Activated CD4-positive, alpha-beta T cell treated with anti-CD3 and anti-CD28 coated beads for 36 hours (primary cell): ENCODE measurements at regions of chr6 and their contacts with region 1.

Region 1: GRCh38 chr6:42043787-42044475 is 6.4 kb upstream of the TAF8 start:
- DNase-seq: peak; percentile 97
- ATAC-seq: peak; percentile 42
- H3K4me3 Mint-ChIP-seq: peak overlapping the region; percentile 88
- H3K27ac Mint-ChIP-seq: peak overlapping the region; percentile 100
- H3K4me1 Mint-ChIP-seq: peaks cover 84% of the 10 kb centered on the region
- H3K27me3 Mint-ChIP-seq: no peaks in the 10 kb centered on the region

Region 2: DNA sequence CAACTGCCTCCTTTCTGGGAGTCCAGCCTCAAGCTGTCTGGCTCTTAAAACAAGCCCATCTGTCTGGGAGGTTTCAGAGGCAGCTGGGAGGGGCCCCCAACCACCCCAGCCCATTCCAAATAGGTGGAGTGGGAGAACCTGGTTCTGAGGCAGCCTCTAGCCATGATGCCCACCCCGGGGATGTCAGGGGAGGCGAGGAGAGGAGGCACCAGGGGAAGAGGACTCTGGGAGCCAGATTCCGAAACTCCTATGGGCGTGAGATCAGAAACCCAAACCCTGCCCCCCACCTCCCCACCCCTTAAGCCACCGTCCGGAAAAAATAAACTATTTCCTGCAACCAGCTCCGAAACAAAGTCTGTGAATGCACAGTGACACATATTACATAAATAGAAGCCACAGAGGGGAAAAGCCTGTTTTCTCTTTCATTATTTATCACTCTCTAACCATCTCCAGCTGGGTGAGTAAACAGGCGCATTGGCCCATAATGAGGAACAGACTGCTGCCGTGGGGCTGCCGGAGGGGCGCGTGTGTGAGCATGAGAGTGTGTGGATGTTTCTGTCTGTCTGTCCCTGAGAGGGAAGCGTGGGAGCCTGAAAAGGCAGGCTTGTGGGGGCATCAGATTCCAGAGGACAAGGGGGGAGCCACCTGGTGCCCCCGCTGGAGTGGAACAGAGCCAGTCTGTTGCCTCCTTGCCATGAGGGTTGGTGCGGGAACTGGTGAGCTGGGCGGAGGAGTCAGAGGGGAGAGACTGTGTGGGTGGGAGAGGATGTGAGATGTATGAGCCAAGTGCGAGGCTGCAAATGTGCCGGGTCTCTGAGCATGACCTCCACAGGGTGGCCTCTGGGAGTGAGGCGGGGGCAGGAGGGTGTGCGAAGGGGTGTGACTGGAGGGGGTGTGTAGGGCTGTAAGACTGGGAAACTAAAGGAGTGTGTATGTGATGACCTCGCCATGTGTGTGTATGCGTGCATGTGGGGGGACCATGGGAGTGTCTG is 512.0 kb before region 1 on chr6:
- CTCF ChIA-PET with region 1: no interaction called
- POLR2A ChIA-PET with region 1: no interaction called
- intact Hi-C with region 1: loop called in 1 of 2 experiments (anchors 5 kb)
- DNase-seq: peak; percentile 87
- ATAC-seq: peak; percentile 88
- H3K4me3 Mint-ChIP-seq: peak overlapping the region; percentile 64
- H3K27ac Mint-ChIP-seq: peak overlapping the region; percentile 93
- H3K4me1 Mint-ChIP-seq: peaks cover 35% of the 10 kb centered on the region
- H3K27me3 Mint-ChIP-seq: peaks cover 15% of the 10 kb centered on the region

Region 3: DNA sequence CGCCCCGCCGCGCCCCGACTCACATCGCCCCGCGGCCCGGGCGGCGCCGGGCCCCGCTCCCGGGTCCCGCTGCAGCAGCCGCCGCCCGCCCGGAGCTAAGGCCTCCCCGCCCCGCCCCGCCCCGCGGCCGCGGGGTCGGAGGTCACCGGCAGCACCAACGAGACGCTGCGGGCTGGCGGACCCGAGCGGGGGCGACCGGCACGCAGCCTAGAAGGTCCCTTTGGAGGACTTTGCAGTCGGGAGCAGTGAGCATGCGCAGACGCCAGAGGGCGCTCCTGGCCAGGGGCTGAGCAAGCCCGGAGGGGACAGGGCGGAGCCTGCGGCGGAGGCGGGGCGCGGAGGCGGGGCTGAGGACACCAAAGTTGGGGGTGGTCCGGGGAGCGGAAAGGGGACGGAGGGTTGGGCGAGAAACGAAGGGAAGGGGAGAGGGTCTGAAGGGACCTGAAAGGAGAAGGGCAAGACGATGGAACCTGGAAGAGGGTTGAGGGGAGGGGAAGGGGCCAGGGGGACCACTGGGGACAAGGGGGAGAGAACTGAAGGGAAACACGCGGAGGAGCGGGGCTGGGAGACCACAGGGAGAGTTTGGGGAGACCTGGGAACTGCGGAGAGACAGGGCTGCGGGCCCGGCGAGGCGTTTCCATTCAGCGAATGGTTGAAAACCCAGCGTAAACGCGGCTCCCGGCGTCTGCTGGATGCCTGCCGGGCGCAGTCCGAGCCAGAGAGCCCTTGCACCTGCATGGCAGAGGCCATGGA is 264.0 kb before region 1 on chr6 and contains the start of gene FRS3:
- CTCF ChIA-PET with region 1: interaction called, 63 read pairs
- POLR2A ChIA-PET with region 1: no interaction called
- intact Hi-C with region 1: loop called (anchors 1 kb)
- DNase-seq: peak; percentile 100
- ATAC-seq: peak; percentile 98
- H3K4me3 Mint-ChIP-seq: peak within 1 kb of the TSS; percentile 85
- H3K27ac Mint-ChIP-seq: peak within 1 kb of the TSS; percentile 75
- H3K4me1 Mint-ChIP-seq: peaks cover 18% of the 10 kb centered on the region
- H3K27me3 Mint-ChIP-seq: peaks cover 7% of the 10 kb centered on the region
- total RNA-seq, gene FRS3: 4.8 to 5.6 TPM

Region 4: GRCh38 chr6:41895300-41896233 is 148.4 kb before region 1 on chr6 and contains the start of gene USP49:
- CTCF ChIA-PET with region 1: interaction called, 9 read pairs
- POLR2A ChIA-PET with region 1: no interaction called
- intact Hi-C with region 1: loop called in 1 of 2 experiments (anchors 1 kb)
- DNase-seq: peak; percentile 96
- ATAC-seq: peak; percentile 92
- H3K4me3 Mint-ChIP-seq: no peak within 1 kb of the TSS
- H3K27ac Mint-ChIP-seq: peak within 1 kb of the TSS; percentile 95
- H3K4me1 Mint-ChIP-seq: peaks cover 13% of the 10 kb centered on the region
- H3K27me3 Mint-ChIP-seq: no peaks in the 10 kb centered on the region
- total RNA-seq, gene USP49: 5.6 to 7.3 TPM

Region 5: DNA sequence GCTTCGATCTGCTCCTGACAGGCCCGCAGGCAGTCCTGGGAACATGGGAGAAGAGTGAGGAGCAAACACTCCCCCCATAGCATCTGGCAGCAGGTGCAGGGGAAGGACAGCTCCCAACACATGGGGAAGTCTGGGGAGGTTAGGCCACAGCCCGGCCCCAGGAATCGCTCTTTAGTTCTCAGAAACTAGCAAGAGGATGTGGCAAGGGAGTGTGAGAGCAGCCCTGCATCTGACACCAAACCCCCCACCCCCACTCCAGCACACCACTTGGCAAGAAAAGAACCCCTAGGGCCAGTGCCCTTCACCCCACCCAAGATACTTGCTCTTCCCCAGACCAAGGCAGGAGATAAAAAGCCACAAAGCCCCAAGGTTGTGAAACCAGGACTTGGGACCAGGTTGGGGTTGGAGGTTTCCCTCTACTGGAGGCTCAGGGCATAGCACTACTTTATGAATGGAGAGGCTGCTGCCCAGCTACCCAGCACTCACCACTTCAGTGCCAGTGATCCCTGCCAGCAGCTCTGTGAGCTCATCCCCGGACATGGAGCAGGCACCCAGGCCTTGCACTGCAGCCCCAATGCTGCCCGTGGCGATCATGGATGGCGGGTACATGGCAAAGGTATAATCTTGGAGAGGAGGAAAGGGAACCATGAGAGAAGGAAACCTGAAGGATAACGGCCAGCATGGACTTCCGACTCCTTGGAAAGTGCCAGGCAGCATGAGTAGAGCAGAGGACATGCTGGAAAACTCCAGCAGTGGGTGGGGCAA is 107.7 kb before region 1 on chr6:
- CTCF ChIA-PET with region 1: interaction called, 355 read pairs
- POLR2A ChIA-PET with region 1: interaction called, 28 read pairs
- intact Hi-C with region 1: loop called (anchors 1 kb)
- DNase-seq: peak; percentile 83
- ATAC-seq: peak; percentile 54
- H3K4me3 Mint-ChIP-seq: peak overlapping the region; percentile 100
- H3K27ac Mint-ChIP-seq: peak overlapping the region; percentile 96
- H3K4me1 Mint-ChIP-seq: peaks cover 55% of the 10 kb centered on the region
- H3K27me3 Mint-ChIP-seq: no peaks in the 10 kb centered on the region

Region 6: GRCh38 chr6:42009966-42010891 is 33.7 kb before region 1 on chr6:
- CTCF ChIA-PET with region 1: interaction called, 11 read pairs
- POLR2A ChIA-PET with region 1: interaction called, 5 read pairs
- intact Hi-C with region 1: loop called (anchors 1 to 5 kb)
- DNase-seq: peak; percentile 71
- ATAC-seq: peak; percentile 71
- H3K4me3 Mint-ChIP-seq: peak overlapping the region; percentile 66
- H3K27ac Mint-ChIP-seq: peak overlapping the region; percentile 98
- H3K4me1 Mint-ChIP-seq: peaks cover 76% of the 10 kb centered on the region
- H3K27me3 Mint-ChIP-seq: no peaks in the 10 kb centered on the region

Region 7: DNA sequence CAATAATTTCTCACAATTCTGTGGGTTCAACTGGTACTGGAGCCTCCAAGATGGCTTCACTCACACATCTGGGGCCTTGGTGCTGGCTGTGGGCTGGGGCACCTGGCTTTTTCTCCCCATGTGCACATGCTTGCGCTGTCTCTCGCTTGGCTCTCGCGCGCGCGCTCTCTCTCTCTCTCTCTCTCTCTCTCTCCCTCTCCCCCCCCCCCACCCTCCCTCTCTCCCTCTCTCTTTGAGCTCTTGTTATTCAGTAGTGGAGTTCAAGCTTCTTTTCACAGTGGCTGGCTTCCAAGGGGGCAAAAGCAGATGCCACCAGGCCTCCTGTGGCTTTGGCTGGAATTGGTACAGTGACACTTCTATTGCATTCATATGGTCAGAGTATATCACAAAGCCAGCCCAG is 712.8 kb after region 1 on chr6:
- CTCF ChIA-PET with region 1: no interaction called
- POLR2A ChIA-PET with region 1: no interaction called
- intact Hi-C with region 1: no loop called
- DNase-seq: no peak
- ATAC-seq: no peak
- H3K4me3 Mint-ChIP-seq: no peak overlapping the region
- H3K27ac Mint-ChIP-seq: no peak overlapping the region
- H3K4me1 Mint-ChIP-seq: peaks cover 10% of the 10 kb centered on the region
- H3K27me3 Mint-ChIP-seq: no peaks in the 10 kb centered on the region

Region 8: GRCh38 chr6:42782622-42783176 is 738.8 kb after region 1 on chr6:
- CTCF ChIA-PET with region 1: no interaction called
- POLR2A ChIA-PET with region 1: no interaction called
- intact Hi-C with region 1: loop called in 1 of 2 experiments (anchors 5 kb)
- DNase-seq: peak; percentile 83
- ATAC-seq: peak; percentile 64
- H3K4me3 Mint-ChIP-seq: peak overlapping the region; percentile 81
- H3K27ac Mint-ChIP-seq: peak overlapping the region; percentile 96
- H3K4me1 Mint-ChIP-seq: peaks cover 25% of the 10 kb centered on the region
- H3K27me3 Mint-ChIP-seq: no peaks in the 10 kb centered on the region